ENCODE measurements at regions of chr12 and their contacts with region 1.

Region 1: GRCh38 chr12:82527165-82527780 is 159.4 kb upstream of the TMTC2 start:
- DNase-seq: peak; percentile 30
- ATAC-seq: 0 out of 2 replicates have a peak, but pooled peaks have one; percentile 68
- H3K4me3 ChIP-seq: no peak overlapping the region
- H3K27ac ChIP-seq: no peak overlapping the region
- H3K4me1 ChIP-seq: no peaks in the 10 kb centered on the region
- H3K27me3 ChIP-seq: no peaks in the 10 kb centered on the region; the same call in 1 of the 2 replicates
- CTCF ChIP-seq: peak; percentile 83; the same call in 1 of the 2 replicates

Region 2: GRCh38 chr12:82627569-82628198 is 100.4 kb after region 1 on chr12:
- CTCF ChIA-PET with region 1: no interaction called
- POLR2A ChIA-PET with region 1: no interaction called
- in situ Hi-C with region 1: no loop called
- intact Hi-C with region 1: loop called (anchors 2 kb)
- DNase-seq: no peak
- ATAC-seq: peak; percentile 63; the same call in 1 of the 2 replicates
- H3K4me3 ChIP-seq: no peak overlapping the region
- H3K27ac ChIP-seq: no peak overlapping the region
- H3K4me1 ChIP-seq: no peaks in the 10 kb centered on the region
- H3K27me3 ChIP-seq: no peaks in the 10 kb centered on the region
- CTCF ChIP-seq: peak; percentile 54

Measured in Panc1 (cell line).